Esophagus muscularis mucosa (tissue), 4 donors: ENCODE measurements at regions of chr19 and their contacts with region 1.

Region 1: GRCh38 chr19:19776041-19777008 is 43.4 kb upstream of the ZNF14 start:
- DNase-seq: peak; percentile 99
- H3K4me3 ChIP-seq: peak overlapping the region; percentile 68 to 87 (median 76)
- H3K27ac ChIP-seq: peak overlapping the region; percentile 71 to 82 (median 76)
- H3K4me1 ChIP-seq: peaks cover 14 to 29% (median 23%) of the 10 kb centered on the region in 4 donors
- H3K27me3 ChIP-seq: no peaks in the 10 kb centered on the region
- CTCF ChIP-seq: peak in 1 of 3 experiments; percentile 8
- EP300 ChIP-seq: no peak
- POLR2A ChIP-seq: no peak

Region 2: DNA sequence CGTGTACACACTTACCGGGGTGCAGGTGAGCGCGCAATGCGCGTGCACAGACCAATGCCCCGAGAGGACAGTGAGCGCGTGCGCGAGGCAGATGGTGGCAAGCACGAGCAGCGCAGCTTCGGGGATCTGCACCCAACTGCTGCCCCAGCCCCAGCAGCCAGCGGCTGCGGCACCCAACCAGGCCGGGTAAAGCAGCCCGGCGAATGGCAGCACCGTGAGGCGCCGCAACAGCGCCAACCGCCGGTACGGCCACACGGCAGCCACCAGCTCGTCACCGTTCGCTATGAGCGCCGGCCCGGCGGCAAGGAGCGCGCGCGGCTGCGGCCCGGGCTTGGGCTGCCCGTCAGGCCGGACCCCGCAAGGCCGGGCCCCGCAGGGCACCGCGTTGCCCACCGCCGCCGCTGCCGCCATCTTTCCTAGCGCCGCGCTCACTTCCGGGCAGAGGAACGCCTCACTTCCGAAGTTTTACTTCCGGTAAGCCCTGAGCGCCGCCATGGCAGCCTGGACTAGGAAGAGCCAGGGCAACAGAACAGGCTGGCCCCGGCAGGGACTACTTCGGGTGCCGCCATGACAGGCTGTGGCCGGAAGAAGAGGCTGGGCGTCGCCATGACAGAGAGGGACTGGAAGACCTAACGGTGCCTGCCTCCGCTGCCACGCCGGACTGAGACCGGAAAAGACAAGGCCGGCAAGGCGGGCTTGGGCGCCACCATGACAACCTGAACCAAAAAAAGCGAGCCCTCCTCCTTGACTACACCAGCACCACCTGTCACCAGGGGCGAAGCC is 112.9 kb before region 1 on chr19 and contains the start of gene ATP13A1:
- intact Hi-C with region 1: loop called (anchors 5 kb)
- DNase-seq: peak; percentile 98
- H3K4me3 ChIP-seq: peak within 1 kb of the TSS; percentile 73 to 99 (median 94)
- H3K27ac ChIP-seq: peak within 1 kb of the TSS; percentile 87 to 95 (median 92)
- H3K4me1 ChIP-seq: peaks cover 21 to 42% (median 34%) of the 10 kb centered on the region in 4 donors
- H3K27me3 ChIP-seq: no peaks in the 10 kb centered on the region
- CTCF ChIP-seq: peak in 2 of 3 experiments; percentile 23
- EP300 ChIP-seq: no peak
- POLR2A ChIP-seq: no peak
- total RNA-seq, gene ATP13A1: 59.3 to 104 (median 81.7) TPM